Panc1 (cell line): ENCODE measurements at regions of chr11 and their contacts with region 1.

Region 1: DNA sequence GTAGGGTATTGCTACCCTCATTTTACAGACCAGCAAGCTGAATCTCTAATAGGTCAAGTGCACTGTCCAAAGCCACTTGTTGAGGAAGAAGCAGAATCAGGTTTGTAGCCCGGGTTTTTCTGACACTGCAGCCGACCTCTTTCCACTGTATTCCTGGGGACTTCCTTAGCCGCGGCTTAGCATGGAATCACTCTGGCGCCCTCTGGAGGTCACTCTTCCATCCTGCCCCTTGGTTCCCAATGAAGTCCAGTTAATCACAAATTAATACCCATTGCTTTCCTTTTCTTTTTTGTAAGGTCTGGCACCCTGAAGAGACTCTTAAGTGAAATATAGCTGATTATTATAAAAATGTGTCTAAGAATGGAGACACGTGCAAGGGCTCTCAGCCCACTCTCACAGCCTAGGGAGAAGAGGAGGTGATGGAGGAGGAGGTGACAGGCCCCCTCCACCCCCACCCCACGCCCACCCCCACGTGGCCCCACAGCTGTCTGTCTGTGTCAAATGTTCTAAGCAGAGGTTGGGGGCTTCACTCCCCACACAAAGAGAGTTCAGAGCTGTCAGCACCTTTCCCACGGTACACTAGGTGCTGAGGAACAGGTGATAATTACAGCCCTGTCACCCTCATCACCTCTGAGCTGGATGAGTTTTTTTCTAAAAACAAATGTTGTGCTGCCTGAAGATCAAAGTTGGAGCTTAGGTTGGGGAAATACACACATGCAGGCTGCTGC is 57.7 kb upstream of the DRD2 start:
- DNase-seq: peak; percentile 41
- ATAC-seq: peak; percentile 89
- H3K4me3 ChIP-seq: no peak overlapping the region
- H3K27ac ChIP-seq: peak overlapping the region; percentile 26; the same call in 1 of the 2 replicates
- H3K4me1 ChIP-seq: no peaks in the 10 kb centered on the region
- H3K27me3 ChIP-seq: peaks cover 3% of the 10 kb centered on the region; the same call in 1 of the 2 replicates
- CTCF ChIP-seq: peak; percentile 96

Region 2: GRCh38 chr11:112235750-112236390 is 1297.0 kb before region 1 on chr11:
- CTCF ChIA-PET with region 1: no interaction called
- POLR2A ChIA-PET with region 1: no interaction called
- in situ Hi-C with region 1: no loop called
- intact Hi-C with region 1: no loop called
- DNase-seq: no peak
- ATAC-seq: no peak
- H3K4me3 ChIP-seq: no peak overlapping the region
- H3K27ac ChIP-seq: no peak overlapping the region
- H3K4me1 ChIP-seq: peaks cover 3% of the 10 kb centered on the region
- H3K27me3 ChIP-seq: no peaks in the 10 kb centered on the region
- CTCF ChIP-seq: no peak

Region 3: GRCh38 chr11:113314389-113315301 is 218.2 kb before region 1 on chr11 and contains the start of gene TTC12:
- CTCF ChIA-PET with region 1: interaction called, 10 read pairs
- POLR2A ChIA-PET with region 1: no interaction called
- in situ Hi-C with region 1: no loop called
- intact Hi-C with region 1: no loop called
- DNase-seq: peak; percentile 61
- ATAC-seq: peak; percentile 99
- H3K4me3 ChIP-seq: peak within 1 kb of the TSS; percentile 72 to 79
- H3K27ac ChIP-seq: peak within 1 kb of the TSS; percentile 93
- H3K4me1 ChIP-seq: peaks cover 15% of the 10 kb centered on the region
- H3K27me3 ChIP-seq: no peaks in the 10 kb centered on the region
- CTCF ChIP-seq: no peak
- total RNA-seq, gene TTC12: 24.3 TPM

Region 4: DNA sequence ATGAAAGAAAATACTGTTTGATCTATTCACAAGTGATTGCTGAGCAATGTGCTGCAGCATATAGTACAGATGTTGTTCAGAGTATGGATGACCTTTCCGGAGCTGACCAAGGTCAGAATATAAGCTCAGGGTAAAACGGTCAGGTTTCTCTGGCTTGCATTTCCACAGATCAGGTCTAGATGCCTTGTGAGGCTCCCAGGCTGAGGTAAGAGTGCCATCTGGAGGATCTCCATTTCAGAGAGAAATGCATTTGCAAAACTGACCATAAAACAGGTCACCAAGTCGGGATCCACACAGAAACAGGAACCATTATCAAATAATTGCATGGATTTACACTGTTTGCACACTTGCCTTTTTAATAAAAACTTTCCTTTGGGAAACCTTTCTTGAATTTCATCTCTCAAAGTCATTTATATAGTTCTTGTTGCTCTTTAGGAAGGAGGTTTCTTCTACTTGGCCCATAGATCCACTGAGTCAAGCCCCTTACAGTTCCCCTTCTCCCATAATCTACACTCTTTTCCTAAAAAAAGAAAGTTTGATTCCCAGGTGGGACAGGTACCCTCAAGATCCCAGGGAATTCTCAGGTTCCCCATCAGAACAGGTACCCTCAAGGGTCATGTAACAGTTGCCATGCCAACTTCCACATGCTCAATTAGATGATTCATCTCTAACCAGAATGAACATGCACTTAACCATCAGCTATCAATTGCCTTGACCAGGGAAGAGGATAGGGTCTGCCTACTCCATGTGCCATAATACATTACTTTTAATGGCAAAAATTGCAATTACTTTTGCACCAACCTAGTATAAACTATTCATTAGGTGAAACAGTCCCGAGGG is 198.2 kb after region 1 on chr11:
- CTCF ChIA-PET with region 1: interaction called, 3 read pairs
- POLR2A ChIA-PET with region 1: no interaction called
- in situ Hi-C with region 1: no loop called
- intact Hi-C with region 1: loop called (anchors 5 kb)
- DNase-seq: peak; percentile 20
- ATAC-seq: peak; percentile 91
- H3K4me3 ChIP-seq: no peak overlapping the region
- H3K27ac ChIP-seq: peak overlapping the region; percentile 65; the same call in 1 of the 2 replicates
- H3K4me1 ChIP-seq: peaks cover 6% of the 10 kb centered on the region; the same call in 1 of the 2 replicates
- H3K27me3 ChIP-seq: no peaks in the 10 kb centered on the region
- CTCF ChIP-seq: peak; percentile 81